ENCODE measurements at regions of chr5 and their contacts with region 1.

Region 1: GRCh38 chr5:159209438-159210305 is at the start of gene RNF145:
- DNase-seq: peak; percentile 92
- H3K4me3 ChIP-seq: peak within 1 kb of the TSS; percentile 75
- H3K27ac ChIP-seq: peak within 1 kb of the TSS; percentile 96
- H3K4me1 ChIP-seq: peaks cover 60% of the 10 kb centered on the region
- H3K27me3 ChIP-seq: no peaks in the 10 kb centered on the region
- CTCF ChIP-seq: no peak
- total RNA-seq, gene RNF145: 103 and 132 TPM in 2 replicates

Region 2: GRCh38 chr5:159106569-159107282 is 102.9 kb before region 1 on chr5:
- CTCF ChIA-PET with region 1: no interaction called
- POLR2A ChIA-PET with region 1: no interaction called
- intact Hi-C with region 1: no loop called
- DNase-seq: peak; percentile 73
- H3K4me3 ChIP-seq: peak overlapping the region; percentile 34
- H3K27ac ChIP-seq: no peak overlapping the region
- H3K4me1 ChIP-seq: no peaks in the 10 kb centered on the region
- H3K27me3 ChIP-seq: peaks cover 16% of the 10 kb centered on the region
- CTCF ChIP-seq: peak; percentile 89

Region 3: GRCh38 chr5:159262859-159263567 is 53.3 kb after region 1 on chr5 and contains the start of gene UBLCP1:
- CTCF ChIA-PET with region 1: no interaction called
- POLR2A ChIA-PET with region 1: no interaction called
- intact Hi-C with region 1: loop called (anchors 2 kb)
- DNase-seq: peak; percentile 85
- H3K4me3 ChIP-seq: peak within 1 kb of the TSS; percentile 89
- H3K27ac ChIP-seq: peak within 1 kb of the TSS; percentile 94
- H3K4me1 ChIP-seq: peaks cover 4% of the 10 kb centered on the region
- H3K27me3 ChIP-seq: no peaks in the 10 kb centered on the region
- CTCF ChIP-seq: no peak
- total RNA-seq, gene UBLCP1: 23.5 and 23.8 TPM in 2 replicates

Region 4: GRCh38 chr5:160379511-160379910 is 1169.8 kb after region 1 on chr5:
- CTCF ChIA-PET with region 1: no interaction called
- POLR2A ChIA-PET with region 1: no interaction called
- intact Hi-C with region 1: no loop called
- DNase-seq: no peak
- H3K4me3 ChIP-seq: no peak overlapping the region
- H3K27ac ChIP-seq: no peak overlapping the region
- H3K4me1 ChIP-seq: peaks cover 7% of the 10 kb centered on the region
- H3K27me3 ChIP-seq: peaks cover 4% of the 10 kb centered on the region
- CTCF ChIP-seq: no peak

Region 5: DNA sequence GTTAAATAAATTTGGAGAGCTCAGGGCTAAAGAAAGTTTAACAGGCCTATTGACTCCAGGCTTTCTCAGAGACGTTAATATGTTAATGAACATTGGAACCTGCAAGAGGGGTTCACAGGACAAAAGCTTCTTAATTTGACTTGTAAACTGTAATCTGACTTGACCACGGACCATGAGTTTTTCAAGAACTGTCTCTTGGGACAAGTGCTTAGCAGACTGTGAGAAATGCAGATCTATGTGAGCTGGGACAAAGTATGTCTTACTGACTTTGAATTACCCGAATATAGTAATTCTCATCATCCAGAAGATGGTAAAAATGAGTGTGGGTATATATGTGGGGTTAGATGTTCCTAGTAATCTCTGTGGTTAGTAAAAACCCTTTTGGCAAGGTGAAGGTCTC is 1455.8 kb after region 1 on chr5:
- CTCF ChIA-PET with region 1: no interaction called
- POLR2A ChIA-PET with region 1: no interaction called
- intact Hi-C with region 1: no loop called
- DNase-seq: no peak
- H3K4me3 ChIP-seq: no peak overlapping the region
- H3K27ac ChIP-seq: no peak overlapping the region
- H3K4me1 ChIP-seq: no peaks in the 10 kb centered on the region
- H3K27me3 ChIP-seq: peaks cover 22% of the 10 kb centered on the region
- CTCF ChIP-seq: no peak

Measured in A673 (cell line).